ENCODE measurements at regions of chr2 and their contacts with region 1.

Region 1: DNA sequence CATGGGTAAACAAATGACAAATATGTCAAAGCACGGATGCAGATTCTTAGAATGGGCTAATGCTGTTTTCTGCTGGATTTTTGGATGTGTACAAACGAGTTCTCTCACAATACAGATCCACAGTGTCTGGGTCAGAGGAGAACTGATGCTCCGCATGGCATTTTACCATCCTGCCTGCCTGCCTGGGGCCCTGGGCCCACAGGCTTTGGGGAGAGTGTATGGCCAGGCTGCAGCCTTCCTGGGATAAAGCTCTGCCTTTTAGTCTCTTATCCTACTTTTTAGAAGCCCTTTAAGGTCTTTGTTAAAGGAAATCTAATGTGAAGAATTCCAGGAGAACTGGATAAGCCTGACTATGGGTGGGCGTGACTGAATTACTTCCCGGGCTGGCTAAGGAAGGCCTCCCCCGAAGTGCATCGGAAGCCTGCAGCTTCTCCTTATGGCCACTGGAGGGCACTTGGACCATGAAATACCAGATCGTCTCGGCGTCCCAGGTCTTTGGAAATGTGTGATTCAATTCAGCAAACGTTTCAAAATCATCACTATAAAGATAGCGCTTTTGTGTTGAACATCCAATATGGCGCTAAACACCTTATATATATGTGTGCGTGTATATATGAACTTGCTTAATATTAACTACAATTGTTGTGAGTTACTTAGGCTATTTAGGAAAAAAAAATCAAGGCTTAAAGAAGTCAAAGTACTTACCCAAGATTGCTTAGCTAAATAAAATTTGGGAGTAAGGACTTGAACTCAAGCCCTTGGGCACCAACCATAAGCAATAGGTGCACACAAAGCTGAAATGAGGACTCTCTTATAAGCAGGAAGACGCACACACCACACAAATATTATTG is 15.2 kb upstream of the DNPEP start:
- DNase-seq: peak; percentile 82
- CTCF ChIP-seq: peak; percentile 87

Region 2: DNA sequence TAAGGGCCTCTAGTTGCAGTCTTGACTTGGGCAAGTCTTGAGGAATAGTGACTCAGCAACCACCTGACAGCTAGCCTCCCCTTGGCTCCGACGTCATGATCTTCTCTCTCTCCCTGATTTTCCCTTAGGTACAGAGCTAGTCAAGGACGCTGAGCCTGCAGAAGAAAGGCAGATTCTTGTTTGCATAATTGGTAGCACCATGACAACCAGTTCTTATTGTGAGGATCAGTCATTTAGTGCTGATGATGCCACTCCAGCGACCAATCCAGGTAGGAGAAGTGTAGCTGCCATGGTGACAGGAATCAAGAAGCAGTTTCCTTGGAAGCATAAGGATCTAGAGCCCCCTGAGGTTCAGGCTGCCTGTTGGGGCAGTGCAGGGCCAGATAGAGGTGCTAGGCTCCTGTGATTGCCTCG is 67.5 kb before region 1 on chr2:
- in situ Hi-C with region 1: no loop called
- DNase-seq: no peak
- CTCF ChIP-seq: no peak

Region 3: GRCh38 chr2:219530048-219530963 is 127.4 kb after region 1 on chr2:
- in situ Hi-C with region 1: loop called (anchors 10 kb)
- DNase-seq: peak; percentile 95
- CTCF ChIP-seq: peak; percentile 95

Region 4: GRCh38 chr2:219844401-219845091 is 441.7 kb after region 1 on chr2:
- in situ Hi-C with region 1: no loop called
- DNase-seq: peak; percentile 48
- CTCF ChIP-seq: no peak

Region 5: GRCh38 chr2:220188031-220188430 is 785.1 kb after region 1 on chr2:
- in situ Hi-C with region 1: no loop called
- DNase-seq: no peak
- CTCF ChIP-seq: no peak

Measured in GM13977 (cell line).